H1 (cell line): ENCODE measurements at regions of chr3 and their contacts with region 1.

Region 1: DNA sequence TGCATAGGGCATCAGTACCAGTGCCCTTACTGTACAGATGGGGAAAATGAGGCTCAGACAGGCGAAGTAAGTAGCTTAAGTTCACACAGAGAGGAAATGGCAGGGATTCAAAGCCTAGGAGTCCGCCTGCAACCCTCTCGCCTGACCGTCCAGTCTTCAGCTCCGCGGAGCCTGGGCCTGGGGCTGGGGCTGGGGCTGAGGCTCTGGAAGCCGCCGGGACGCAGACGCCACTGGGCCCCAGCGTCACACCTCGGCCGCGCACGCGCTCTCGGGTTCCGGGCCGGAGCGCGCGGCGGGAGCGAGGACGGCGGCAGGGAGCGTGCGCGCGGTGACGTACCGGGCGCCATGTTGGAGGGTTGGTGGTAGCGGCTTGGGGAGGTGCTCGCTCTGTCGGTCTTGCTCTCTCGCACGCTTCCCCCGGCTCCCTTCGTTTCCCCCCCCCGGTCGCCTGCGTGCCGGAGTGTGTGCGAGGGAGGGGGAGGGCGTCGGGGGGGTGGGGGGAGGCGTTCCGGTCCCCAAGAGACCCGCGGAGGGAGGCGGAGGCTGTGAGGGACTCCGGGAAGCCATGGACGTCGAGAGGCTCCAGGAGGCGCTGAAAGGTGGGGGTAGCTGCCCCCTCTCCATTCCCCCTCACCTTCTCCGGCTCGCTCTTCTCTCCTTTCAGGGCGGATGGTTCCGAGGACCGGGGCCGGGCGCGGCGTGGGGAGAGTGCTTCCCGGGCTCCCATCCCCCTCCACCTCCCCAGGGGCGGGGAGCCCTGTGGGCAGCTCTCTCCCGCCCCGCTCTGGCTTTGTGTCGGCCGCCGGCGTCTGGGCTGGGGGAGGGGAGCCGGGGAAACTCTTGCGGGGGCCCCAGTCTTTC is at the start of gene PPP4R2:
- DNase-seq: peak; percentile 57 to 94
- H3K4me3 ChIP-seq: peak within 1 kb of the TSS; percentile 89 to 100 (median 95)
- H3K27ac ChIP-seq: peak within 1 kb of the TSS; percentile 98
- H3K4me1 ChIP-seq: peaks cover 0 to 6% (median 2%) of the 10 kb centered on the region in 4 experiments; a peak in 5 of 7 replicates
- H3K27me3 ChIP-seq: no peaks in the 10 kb centered on the region
- CTCF ChIP-seq: no peak
- EP300 ChIP-seq: 0 out of 3 replicates have a peak, but pooled peaks of 1 of the 2 experiments have one; percentile 45
- POLR2A ChIP-seq: peak; percentile 92 to 98
- RAD21 ChIP-seq: no peak
- total RNA-seq, gene PPP4R2: 89.9 and 91.9 TPM in 2 replicates

Region 2: GRCh38 chr3:72982609-72983366 is 13.9 kb before region 1 on chr3:
- CTCF ChIA-PET with region 1: interaction called, 31 read pairs
- POLR2A ChIA-PET with region 1: interaction called, 6 read pairs
- DNase-seq: no peak
- H3K4me3 ChIP-seq: no peak overlapping the region
- H3K27ac ChIP-seq: no peak overlapping the region
- H3K4me1 ChIP-seq: no peaks in the 10 kb centered on the region
- H3K27me3 ChIP-seq: no peaks in the 10 kb centered on the region
- CTCF ChIP-seq: no peak
- EP300 ChIP-seq: no peak
- POLR2A ChIP-seq: no peak
- RAD21 ChIP-seq: no peak

Region 3: GRCh38 chr3:73007992-73008712 is 11.4 kb after region 1 on chr3:
- CTCF ChIA-PET with region 1: interaction called, 11 read pairs
- POLR2A ChIA-PET with region 1: interaction called, 23 read pairs
- DNase-seq: no peak
- H3K4me3 ChIP-seq: no peak overlapping the region
- H3K27ac ChIP-seq: no peak overlapping the region
- H3K4me1 ChIP-seq: no peaks in the 10 kb centered on the region; a peak in 1 of 7 replicates
- H3K27me3 ChIP-seq: no peaks in the 10 kb centered on the region
- CTCF ChIP-seq: no peak
- EP300 ChIP-seq: no peak
- POLR2A ChIP-seq: no peak
- RAD21 ChIP-seq: no peak

Region 4: DNA sequence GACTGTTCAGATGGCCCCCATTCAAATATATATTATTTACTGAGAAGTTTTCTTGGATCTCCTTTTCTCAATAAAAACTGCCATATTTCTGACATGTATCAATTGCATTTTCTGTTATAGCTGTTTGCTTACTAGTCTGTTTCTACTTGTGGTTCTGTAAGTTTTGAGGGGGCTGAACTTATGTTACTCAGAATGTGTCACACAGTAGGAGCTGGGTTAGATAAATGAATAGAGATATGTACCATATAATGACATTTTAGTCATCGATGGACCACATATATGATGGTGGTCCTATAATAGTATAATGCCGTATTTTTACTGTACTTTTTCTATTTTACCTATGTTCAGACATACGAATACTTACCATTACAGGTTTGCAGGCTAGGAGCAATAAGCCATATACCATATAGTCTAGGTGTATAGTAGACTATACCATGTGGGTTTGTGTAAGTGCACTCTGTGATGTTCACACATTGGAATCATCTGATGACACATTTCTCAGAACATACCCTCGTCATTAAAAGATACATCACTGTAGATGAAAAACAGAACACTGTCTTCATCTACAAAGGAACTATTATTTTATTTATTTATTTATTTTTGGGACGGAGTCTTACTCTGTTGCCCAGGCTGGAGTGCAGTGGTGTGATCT is 22.2 kb after region 1 on chr3:
- CTCF ChIA-PET with region 1: interaction called, 13 read pairs
- POLR2A ChIA-PET with region 1: interaction called, 6 read pairs
- DNase-seq: no peak
- H3K4me3 ChIP-seq: no peak overlapping the region
- H3K27ac ChIP-seq: no peak overlapping the region
- H3K4me1 ChIP-seq: peaks cover 0 to 3% (median 1%) of the 10 kb centered on the region in 4 experiments; a peak in 4 of 7 replicates
- H3K27me3 ChIP-seq: no peaks in the 10 kb centered on the region
- CTCF ChIP-seq: no peak
- EP300 ChIP-seq: no peak
- POLR2A ChIP-seq: no peak
- RAD21 ChIP-seq: no peak

Region 5: GRCh38 chr3:73024836-73025235 is 28.1 kb after region 1 on chr3:
- CTCF ChIA-PET with region 1: interaction called, 13 read pairs
- POLR2A ChIA-PET with region 1: interaction called, 10 read pairs
- DNase-seq: no peak
- H3K4me3 ChIP-seq: peak overlapping the region in 1 of 4 experiments; percentile 34; a peak in 1 of 8 replicates
- H3K27ac ChIP-seq: no peak overlapping the region
- H3K4me1 ChIP-seq: peaks cover 0 to 12% (median 6%) of the 10 kb centered on the region in 4 experiments; a peak in 6 of 7 replicates
- H3K27me3 ChIP-seq: no peaks in the 10 kb centered on the region
- CTCF ChIP-seq: no peak
- EP300 ChIP-seq: no peak
- POLR2A ChIP-seq: no peak
- RAD21 ChIP-seq: no peak